ENCODE measurements at regions of chr11 and their contacts with region 1.

Region 1: DNA sequence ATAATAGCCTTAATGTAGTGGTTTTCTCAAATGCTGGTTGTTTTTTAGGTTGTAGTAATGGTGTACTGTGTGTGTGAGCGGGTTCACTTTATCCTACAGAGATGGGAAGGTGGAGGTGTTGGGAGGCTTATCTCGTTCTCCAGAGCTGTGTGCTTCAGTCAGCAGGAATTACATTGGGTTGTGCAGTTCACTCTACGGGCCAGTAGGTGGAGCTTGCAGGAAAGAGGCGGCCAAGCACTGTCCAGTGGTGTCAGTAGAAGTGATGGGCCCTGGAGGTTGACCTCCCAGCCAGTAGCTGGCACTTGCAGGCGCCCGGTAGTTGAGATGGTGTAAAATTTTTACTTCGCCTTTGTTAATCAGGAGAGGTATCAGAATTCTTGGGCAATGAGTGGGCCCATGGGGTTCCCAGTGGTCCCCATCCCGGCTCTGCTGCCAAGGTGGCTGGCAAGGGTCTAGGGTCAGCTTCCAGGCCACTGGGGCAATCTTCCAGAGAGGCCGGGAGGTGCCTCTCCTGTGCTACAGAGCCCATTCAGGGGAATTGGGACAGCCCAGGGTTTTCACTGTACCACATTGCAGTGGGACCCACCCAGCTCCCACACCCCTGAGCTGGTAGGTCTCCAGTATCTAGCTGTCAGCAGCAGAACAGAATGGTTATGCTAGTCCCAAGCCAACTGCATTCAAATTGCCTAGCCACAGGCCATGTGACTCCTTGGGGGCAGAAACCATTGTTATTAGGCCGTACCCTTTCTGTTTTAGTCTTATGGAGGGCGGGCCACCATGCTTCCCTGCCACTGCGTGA is 43.9 kb downstream of the BIRC2 start:
- DNase-seq: peak in 8 of 9 donors; percentile 20 to 55 (median 40)
- ATAC-seq: peak; percentile 92
- H3K4me3 ChIP-seq: no peak overlapping the region
- H3K4me3 Mint-ChIP-seq: peak overlapping the region in 1 of 10 donors; percentile 12
- H3K27ac ChIP-seq: no peak overlapping the region
- H3K27ac Mint-ChIP-seq: peak overlapping the region in 8 of 9 donors; percentile 59 to 91 (median 77)
- H3K4me1 ChIP-seq: peaks cover 0 to 16% of the 10 kb centered on the region in 2 donors
- H3K4me1 Mint-ChIP-seq: peaks cover 10 to 54% (median 48%) of the 10 kb centered on the region in 7 donors
- H3K27me3 ChIP-seq: no peaks in the 10 kb centered on the region
- H3K27me3 Mint-ChIP-seq: no peaks in the 10 kb centered on the region

Region 2: DNA sequence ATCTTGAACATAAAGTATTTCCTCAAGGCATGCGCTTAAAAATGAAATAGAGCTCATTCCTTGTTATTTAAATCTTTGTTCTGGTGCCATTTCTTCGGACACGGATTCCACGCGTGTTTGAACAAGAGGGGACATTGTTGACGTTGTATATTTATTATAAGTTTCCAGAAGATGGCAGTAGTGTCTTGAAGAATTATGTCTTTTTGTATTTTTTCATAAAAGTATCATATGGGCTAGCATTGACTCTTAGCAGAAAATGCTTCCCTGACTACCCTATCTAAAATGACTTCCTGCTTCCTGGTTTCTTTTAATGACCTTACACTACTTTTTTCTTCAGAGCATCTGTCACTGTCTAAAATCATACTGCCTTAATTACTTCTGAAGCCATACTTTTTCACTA is 23.5 kb before region 1 on chr11:
- CTCF ChIA-PET with region 1: interaction called, 7 read pairs
- POLR2A ChIA-PET with region 1: interaction called, 4 read pairs
- intact Hi-C with region 1: loop called in 1 of 2 experiments (anchors 1 kb)
- DNase-seq: peak in 6 of 9 donors; percentile 33 to 65 (median 56)
- ATAC-seq: peak; percentile 77
- H3K4me3 ChIP-seq: no peak overlapping the region
- H3K4me3 Mint-ChIP-seq: peak overlapping the region in 3 of 10 donors; percentile 4 to 28 (median 19)
- H3K27ac ChIP-seq: no peak overlapping the region
- H3K27ac Mint-ChIP-seq: peak overlapping the region; percentile 16 to 93 (median 83)
- H3K4me1 ChIP-seq: peaks cover 0 to 12% of the 10 kb centered on the region in 2 donors
- H3K4me1 Mint-ChIP-seq: peaks cover 9 to 48% (median 33%) of the 10 kb centered on the region in 7 donors
- H3K27me3 ChIP-seq: no peaks in the 10 kb centered on the region
- H3K27me3 Mint-ChIP-seq: no peaks in the 10 kb centered on the region

Region 3: GRCh38 chr11:102377891-102378290 is 13.0 kb before region 1 on chr11:
- CTCF ChIA-PET with region 1: interaction called, 9 read pairs
- POLR2A ChIA-PET with region 1: interaction called, 8 read pairs
- intact Hi-C with region 1: loop called in 1 of 2 experiments (anchors 1 kb)
- DNase-seq: no peak
- ATAC-seq: no peak
- H3K4me3 ChIP-seq: no peak overlapping the region
- H3K4me3 Mint-ChIP-seq: no peak overlapping the region
- H3K27ac ChIP-seq: no peak overlapping the region
- H3K27ac Mint-ChIP-seq: peak overlapping the region in 2 of 9 donors; percentile 2 to 3
- H3K4me1 ChIP-seq: peaks cover 0 to 5% of the 10 kb centered on the region in 2 donors
- H3K4me1 Mint-ChIP-seq: peaks cover 8 to 31% (median 20%) of the 10 kb centered on the region in 7 donors
- H3K27me3 ChIP-seq: no peaks in the 10 kb centered on the region
- H3K27me3 Mint-ChIP-seq: no peaks in the 10 kb centered on the region

Region 4: GRCh38 chr11:102410382-102410784 is 19.5 kb after region 1 on chr11:
- CTCF ChIA-PET with region 1: interaction called, 22 read pairs
- POLR2A ChIA-PET with region 1: interaction called, 4 read pairs
- intact Hi-C with region 1: no loop called
- DNase-seq: no peak
- ATAC-seq: no peak
- H3K4me3 ChIP-seq: no peak overlapping the region
- H3K4me3 Mint-ChIP-seq: peak overlapping the region in 6 of 10 donors; percentile 33 to 76 (median 54)
- H3K27ac ChIP-seq: no peak overlapping the region
- H3K27ac Mint-ChIP-seq: peak overlapping the region; percentile 51 to 93 (median 72)
- H3K4me1 ChIP-seq: peaks cover 20 to 76% of the 10 kb centered on the region in 2 donors
- H3K4me1 Mint-ChIP-seq: peaks cover 70 to 99% (median 92%) of the 10 kb centered on the region in 7 donors
- H3K27me3 ChIP-seq: no peaks in the 10 kb centered on the region
- H3K27me3 Mint-ChIP-seq: no peaks in the 10 kb centered on the region

Region 5: GRCh38 chr11:102495161-102496042 is 104.5 kb after region 1 on chr11:
- CTCF ChIA-PET with region 1: interaction called, 22 read pairs
- POLR2A ChIA-PET with region 1: interaction called, 3 read pairs
- intact Hi-C with region 1: loop called (anchors 1 kb)
- DNase-seq: peak in 7 of 9 donors; percentile 54 to 79 (median 71)
- ATAC-seq: peak; percentile 91
- H3K4me3 ChIP-seq: no peak overlapping the region
- H3K4me3 Mint-ChIP-seq: peak overlapping the region in 1 of 10 donors; percentile 18
- H3K27ac ChIP-seq: no peak overlapping the region
- H3K27ac Mint-ChIP-seq: peak overlapping the region in 4 of 9 donors; percentile 2 to 40 (median 12)
- H3K4me1 ChIP-seq: no peaks in the 10 kb centered on the region
- H3K4me1 Mint-ChIP-seq: peaks cover 4 to 26% (median 10%) of the 10 kb centered on the region in 7 donors
- H3K27me3 ChIP-seq: no peaks in the 10 kb centered on the region
- H3K27me3 Mint-ChIP-seq: peaks cover 0 to 22% (median 0%) of the 10 kb centered on the region in 5 donors